ENCODE measurements at regions of chr2 and their contacts with region 1.

Region 1: DNA sequence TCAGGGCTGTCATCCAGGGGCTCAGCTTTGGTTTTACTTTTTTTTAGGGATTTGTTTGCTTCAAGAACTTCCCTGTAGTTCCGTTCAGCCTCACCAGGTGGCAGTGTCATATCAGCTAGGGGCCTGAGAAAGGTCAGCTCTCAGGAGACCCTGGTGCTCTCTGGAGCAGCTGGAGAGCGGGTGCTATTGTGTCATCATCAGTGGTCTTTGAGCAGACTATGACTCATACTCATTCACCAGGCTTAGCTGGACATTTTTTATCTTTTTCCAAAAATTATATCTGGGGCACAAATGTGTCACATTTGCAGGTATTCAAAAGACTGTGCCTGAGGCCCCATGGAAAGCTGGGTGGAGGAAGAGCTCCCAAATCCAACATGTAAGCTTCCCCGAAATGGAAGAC is 24.4 kb downstream of the ZNF892 start:
- DNase-seq: peak; percentile 57
- H3K4me3 ChIP-seq: no peak overlapping the region
- H3K27ac ChIP-seq: no peak overlapping the region
- H3K4me1 ChIP-seq: peaks cover 8% of the 10 kb centered on the region
- H3K27me3 ChIP-seq: no peaks in the 10 kb centered on the region
- CTCF ChIP-seq: peak; percentile 94 to 99

Region 2: DNA sequence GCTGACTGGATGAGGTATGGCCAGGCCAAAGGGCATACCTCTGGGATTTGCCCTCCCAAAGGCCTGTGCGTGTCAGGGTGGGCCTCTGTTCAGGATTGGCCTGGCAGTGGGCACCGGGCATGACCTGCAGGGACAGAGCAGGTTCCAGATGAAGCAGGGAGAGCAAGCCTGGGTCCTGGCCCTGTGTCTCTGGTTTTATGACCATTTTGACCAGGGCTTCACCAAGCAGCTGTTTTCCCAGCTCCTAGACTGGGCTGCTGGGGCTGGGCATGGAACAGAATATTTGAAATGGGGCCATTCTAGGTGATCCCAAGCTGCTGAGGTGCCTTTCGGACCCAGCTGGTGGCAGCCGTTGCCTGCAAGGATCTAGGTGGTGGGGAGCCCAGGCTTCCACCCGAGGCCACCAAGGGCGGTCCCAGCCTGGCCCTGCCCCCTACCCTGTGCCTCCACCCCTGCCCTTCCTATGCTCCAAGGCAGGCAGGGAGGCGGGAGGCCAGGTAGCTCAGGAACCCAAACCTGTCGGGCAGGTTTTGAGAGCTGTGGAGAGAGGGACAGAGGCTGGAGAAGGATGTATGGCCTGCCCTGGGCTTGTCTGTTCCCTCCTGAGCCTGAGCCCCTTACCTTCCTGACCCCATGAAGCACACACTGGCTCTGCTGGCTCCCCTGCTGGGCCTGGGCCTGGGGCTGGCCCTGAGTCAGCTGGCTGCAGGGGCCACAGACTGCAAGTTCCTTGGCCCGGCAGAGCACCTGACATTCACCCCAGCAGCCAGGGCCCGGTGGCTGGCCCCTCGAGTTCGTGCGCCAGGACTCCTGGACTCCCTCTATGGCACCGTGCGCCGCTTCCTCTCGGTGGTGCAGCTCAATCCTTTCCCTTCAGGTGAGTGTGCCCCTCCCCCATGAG is 42.5 kb after region 1 on chr2 and contains the start of gene PROM2:
- CTCF ChIA-PET with region 1: interaction called, 6 read pairs
- dilution Hi-C with region 1: loop called (anchors 5 kb)
- in situ Hi-C with region 1: no loop called
- intact Hi-C with region 1: loop called (anchors 2 kb)
- DNase-seq: peak; percentile 84
- H3K4me3 ChIP-seq: peak within 1 kb of the TSS; percentile 23 to 62 (median 58)
- H3K27ac ChIP-seq: peak within 1 kb of the TSS; percentile 40
- H3K4me1 ChIP-seq: peaks cover 56% of the 10 kb centered on the region
- H3K27me3 ChIP-seq: no peaks in the 10 kb centered on the region
- CTCF ChIP-seq: no peak
- total RNA-seq, gene PROM2: 27.3 to 73.5 TPM

Region 3: DNA sequence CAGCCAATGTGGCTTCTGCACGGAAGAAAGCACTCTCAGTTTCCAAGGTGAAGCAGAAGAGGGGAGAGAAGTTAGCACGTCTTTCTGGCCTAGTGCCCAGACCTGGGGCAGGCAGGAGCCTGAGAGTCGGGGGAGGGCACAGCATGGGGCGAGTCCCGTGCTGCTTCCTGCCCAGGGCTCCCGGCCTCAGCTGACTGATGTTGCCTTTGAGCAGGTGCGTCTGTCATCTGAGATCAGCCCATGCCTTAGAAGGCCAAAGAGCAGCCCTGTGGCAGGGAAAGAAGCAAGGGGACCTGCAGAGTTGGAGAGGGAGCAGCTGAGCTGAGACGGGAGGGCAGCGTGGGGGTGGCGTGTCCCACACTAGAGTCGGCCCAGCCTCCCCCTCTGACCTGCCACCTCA is 68.7 kb after region 1 on chr2:
- CTCF ChIA-PET with region 1: no interaction called
- dilution Hi-C with region 1: loop called (anchors 5 kb)
- in situ Hi-C with region 1: no loop called
- intact Hi-C with region 1: no loop called
- DNase-seq: peak; percentile 71
- H3K4me3 ChIP-seq: no peak overlapping the region
- H3K27ac ChIP-seq: no peak overlapping the region
- H3K4me1 ChIP-seq: no peaks in the 10 kb centered on the region
- H3K27me3 ChIP-seq: peaks cover 5% of the 10 kb centered on the region
- CTCF ChIP-seq: no peak

Region 4: GRCh38 chr2:95379371-95379831 is 147.7 kb after region 1 on chr2:
- CTCF ChIA-PET with region 1: no interaction called
- dilution Hi-C with region 1: loop called (anchors 10 kb)
- in situ Hi-C with region 1: no loop called
- intact Hi-C with region 1: no loop called
- DNase-seq: no peak
- H3K4me3 ChIP-seq: no peak overlapping the region
- H3K27ac ChIP-seq: no peak overlapping the region
- H3K4me1 ChIP-seq: no peaks in the 10 kb centered on the region
- H3K27me3 ChIP-seq: no peaks in the 10 kb centered on the region
- CTCF ChIP-seq: peak in 1 of 2 donors; percentile 17

Region 5: DNA sequence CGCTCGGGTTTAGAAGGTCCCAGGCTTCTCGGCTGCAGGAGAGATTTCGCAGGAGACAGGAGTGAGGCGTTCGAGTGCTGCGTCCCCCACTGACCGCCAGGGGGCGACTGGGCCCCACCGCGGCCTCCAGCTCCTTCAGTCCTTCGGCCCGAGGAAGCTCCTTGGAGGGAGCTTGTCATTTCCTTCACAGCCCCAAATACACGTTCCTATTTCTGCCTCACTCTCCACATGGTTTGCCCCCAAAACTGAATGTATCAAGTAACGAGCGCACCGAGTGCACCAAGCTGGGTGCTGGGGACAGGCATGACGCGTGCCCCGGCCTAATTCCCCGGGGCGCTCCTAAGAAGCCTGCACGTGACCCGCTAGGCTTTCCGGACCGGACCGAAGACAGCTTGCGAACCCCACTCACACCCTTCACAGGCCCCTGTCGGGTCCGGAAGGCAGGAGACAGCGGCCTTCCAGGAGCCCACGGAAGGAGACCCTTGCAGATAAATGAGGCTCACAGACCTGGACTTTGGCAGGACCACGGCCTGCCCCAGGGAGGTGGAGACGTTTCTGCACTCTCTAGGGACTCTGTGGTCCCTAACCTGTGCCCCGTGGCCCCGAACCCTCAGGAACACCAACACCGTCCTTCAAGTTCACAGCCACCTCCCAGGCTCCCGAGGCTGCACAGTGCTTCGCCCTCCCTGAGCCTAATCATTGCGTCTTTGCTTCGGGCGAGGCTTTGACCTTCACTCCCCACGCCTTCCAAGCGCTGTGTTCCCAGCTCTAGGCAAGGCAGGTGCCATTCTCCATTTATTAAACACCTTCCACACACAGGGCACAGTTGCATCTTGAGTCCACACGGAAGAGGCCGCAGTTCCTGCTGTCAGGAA is 157.8 kb after region 1 on chr2:
- CTCF ChIA-PET with region 1: interaction called, 7 read pairs
- dilution Hi-C with region 1: no loop called
- in situ Hi-C with region 1: no loop called
- intact Hi-C with region 1: loop called (anchors 1 kb)
- DNase-seq: peak; percentile 38
- H3K4me3 ChIP-seq: no peak overlapping the region
- H3K27ac ChIP-seq: no peak overlapping the region
- H3K4me1 ChIP-seq: no peaks in the 10 kb centered on the region
- H3K27me3 ChIP-seq: no peaks in the 10 kb centered on the region
- CTCF ChIP-seq: peak; percentile 92 to 95

Measured in mammary epithelial cell (primary cell).